CD4-positive, alpha-beta memory T cell (primary cell): ENCODE measurements at regions of chr12 and their contacts with region 1.

Region 1: DNA sequence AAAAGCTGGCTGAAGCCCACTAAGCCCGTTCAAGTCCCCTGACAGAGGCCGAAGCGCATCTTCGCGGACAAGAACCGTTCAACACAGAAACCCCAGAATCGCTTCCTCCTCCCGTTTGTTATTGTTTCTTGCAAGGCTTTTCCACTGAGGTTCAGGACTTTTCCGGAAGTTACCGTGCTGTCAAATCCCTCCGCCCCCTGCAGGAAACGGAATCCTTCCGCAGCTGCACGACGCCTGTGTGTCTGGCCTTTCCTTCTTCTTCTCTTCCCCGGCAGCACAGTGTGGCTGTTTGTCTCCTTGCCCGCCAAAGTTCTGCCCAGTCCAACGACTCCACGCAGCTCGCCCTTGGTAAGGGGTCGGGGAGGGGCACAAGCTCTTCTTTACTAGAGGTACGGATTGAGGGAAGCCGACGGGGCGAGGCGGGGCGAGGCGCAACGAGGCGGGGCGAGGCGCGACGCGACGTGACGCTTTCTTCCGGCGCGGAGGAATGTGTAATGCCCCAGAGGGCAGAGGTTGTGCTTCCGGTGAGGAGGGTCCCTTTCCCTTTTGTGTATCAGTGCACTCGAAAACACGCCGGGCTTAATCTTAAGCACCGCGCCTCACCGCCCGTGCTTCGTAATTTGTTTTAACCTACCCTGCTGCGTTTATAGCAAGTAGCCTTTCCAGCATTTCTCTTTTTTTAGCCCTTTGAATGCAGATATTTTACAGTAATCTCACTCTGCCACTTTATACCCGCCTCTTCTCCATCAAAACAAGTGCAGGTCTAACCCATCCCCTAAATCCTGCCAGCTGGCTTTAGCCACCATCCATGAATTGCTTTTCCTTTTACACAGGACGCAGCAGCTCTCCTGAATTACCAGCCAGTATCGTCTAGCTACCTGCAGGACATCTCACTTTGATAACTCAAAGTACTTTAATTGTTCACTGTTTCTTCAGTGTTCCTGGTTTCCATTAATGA is at the start of gene KDM5A:
- DNase-seq: peak; percentile 92 to 95 (median 94)
- H3K4me3 ChIP-seq: peak within 1 kb of the TSS; percentile 87 to 94
- H3K4me3 Mint-ChIP-seq: peak within 1 kb of the TSS; percentile 93 to 100 (median 98)
- H3K27ac ChIP-seq: peak within 1 kb of the TSS; percentile 90
- H3K27ac Mint-ChIP-seq: peak within 1 kb of the TSS; percentile 97 to 100 (median 100)
- H3K4me1 ChIP-seq: peaks cover 45% of the 10 kb centered on the region
- H3K4me1 Mint-ChIP-seq: peaks cover 21 to 56% (median 37%) of the 10 kb centered on the region in 4 donors
- H3K27me3 ChIP-seq: no peaks in the 10 kb centered on the region
- H3K27me3 Mint-ChIP-seq: peaks cover 0 to 4% of the 10 kb centered on the region in 2 donors
- total RNA-seq, gene KDM5A: 126 to 134 TPM

Region 2: GRCh38 chr12:106118-106591 is 283.3 kb before region 1 on chr12:
- CTCF ChIA-PET with region 1: no interaction called
- POLR2A ChIA-PET with region 1: no interaction called
- intact Hi-C with region 1: no loop called
- DNase-seq: no peak
- H3K4me3 ChIP-seq: no peak overlapping the region
- H3K4me3 Mint-ChIP-seq: no peak overlapping the region
- H3K27ac ChIP-seq: no peak overlapping the region
- H3K27ac Mint-ChIP-seq: no peak overlapping the region
- H3K4me1 ChIP-seq: peaks cover 7% of the 10 kb centered on the region
- H3K4me1 Mint-ChIP-seq: peaks cover 0 to 10% (median 7%) of the 10 kb centered on the region in 4 donors
- H3K27me3 ChIP-seq: no peaks in the 10 kb centered on the region
- H3K27me3 Mint-ChIP-seq: peaks cover 11% of the 10 kb centered on the region in 2 donors

Region 3: DNA sequence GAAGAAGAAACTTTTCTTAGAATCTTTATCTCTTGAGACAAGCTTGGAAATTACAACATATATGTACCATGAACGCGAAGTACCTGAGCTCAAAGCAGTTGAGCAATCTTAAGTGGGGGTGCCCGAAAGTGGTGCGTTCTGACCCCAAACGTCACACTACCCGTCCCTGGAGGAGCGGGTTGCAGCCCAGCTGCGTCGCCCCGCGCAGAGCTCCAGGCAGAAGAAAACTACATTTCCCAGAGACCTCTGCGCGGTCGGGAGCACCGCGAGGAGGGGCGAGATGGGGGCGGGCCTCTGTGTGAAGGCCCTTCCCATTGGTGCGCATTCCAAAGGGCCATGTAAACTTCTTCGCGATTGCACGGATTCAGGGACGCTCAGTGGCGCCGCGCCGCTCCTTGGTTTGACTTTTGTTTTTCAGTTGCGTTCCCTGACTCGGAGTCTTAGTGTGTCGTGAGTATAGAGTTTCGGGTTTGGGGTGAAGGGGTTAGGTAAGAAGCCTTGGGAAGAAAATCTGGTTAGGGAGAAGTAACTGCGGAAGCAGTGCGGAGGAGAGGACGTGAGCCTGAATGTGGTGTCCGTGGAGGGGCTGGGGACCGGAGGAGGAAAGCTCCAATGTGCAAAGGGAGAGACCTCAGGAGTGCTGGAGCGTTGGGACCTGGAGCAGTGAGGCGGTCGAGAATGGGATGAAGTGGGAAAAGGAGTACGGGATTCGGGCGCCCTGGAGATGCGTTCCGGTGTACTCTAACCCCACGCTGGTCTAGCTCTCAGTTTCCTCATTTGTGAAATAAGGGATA is 12.0 kb after region 1 on chr12 and contains the start of gene CCDC77:
- CTCF ChIA-PET with region 1: interaction called, 10 read pairs
- POLR2A ChIA-PET with region 1: interaction called, 84 read pairs
- intact Hi-C with region 1: no loop called
- DNase-seq: peak; percentile 92 to 97 (median 95)
- H3K4me3 ChIP-seq: peak within 1 kb of the TSS; percentile 88 to 98
- H3K4me3 Mint-ChIP-seq: peak within 1 kb of the TSS in 1 of 8 donors; percentile 5
- H3K27ac ChIP-seq: peak within 1 kb of the TSS; percentile 68
- H3K27ac Mint-ChIP-seq: no peak within 1 kb of the TSS
- H3K4me1 ChIP-seq: peaks cover 17% of the 10 kb centered on the region
- H3K4me1 Mint-ChIP-seq: peaks cover 0 to 3% (median under 1%) of the 10 kb centered on the region in 4 donors
- H3K27me3 ChIP-seq: no peaks in the 10 kb centered on the region
- H3K27me3 Mint-ChIP-seq: no peaks in the 10 kb centered on the region
- total RNA-seq, gene CCDC77: 7.9 to 13.0 TPM

Region 4: DNA sequence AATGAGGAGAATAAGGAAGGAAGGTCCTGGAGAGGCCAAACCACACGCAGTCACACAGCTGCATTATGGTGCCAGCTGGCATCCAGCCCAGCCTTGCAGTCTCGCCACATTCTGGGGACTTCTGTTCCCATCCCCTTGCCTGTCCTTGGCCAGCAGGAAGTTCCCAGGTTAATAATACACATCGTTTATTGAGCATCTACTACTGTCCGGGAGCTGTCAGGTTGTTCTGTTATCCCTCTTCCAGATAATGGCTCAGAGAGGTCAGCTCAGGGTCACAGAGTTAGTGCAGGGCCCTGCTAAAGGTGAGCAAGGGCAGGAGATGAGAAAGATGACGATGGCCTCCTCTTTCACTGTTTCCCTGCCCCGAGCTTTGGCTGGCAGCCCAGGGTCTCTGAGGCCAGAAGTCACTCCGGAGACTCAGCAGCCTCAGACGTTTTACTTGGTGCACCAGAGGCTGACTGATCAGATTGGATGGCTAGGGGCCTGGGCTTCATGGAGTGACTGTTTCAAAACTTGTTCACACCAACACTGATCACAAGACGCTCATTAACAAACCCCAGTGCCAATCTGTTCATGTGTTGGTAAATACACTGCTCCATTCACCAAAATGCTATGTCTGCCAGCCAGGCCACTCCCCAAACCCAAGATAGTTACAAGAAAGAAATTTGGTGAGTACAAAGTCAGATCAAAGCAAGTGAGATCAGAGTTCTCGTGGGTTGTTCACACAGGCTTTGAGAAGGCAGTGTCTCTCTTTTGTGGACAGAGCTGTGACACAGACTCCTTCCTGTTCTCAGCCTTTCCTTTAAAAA is 149.5 kb after region 1 on chr12:
- CTCF ChIA-PET with region 1: no interaction called
- POLR2A ChIA-PET with region 1: no interaction called
- intact Hi-C with region 1: no loop called
- DNase-seq: peak; percentile 80 to 87 (median 84)
- H3K4me3 ChIP-seq: no peak overlapping the region
- H3K4me3 Mint-ChIP-seq: peak overlapping the region in 7 of 8 donors; percentile 0 to 78 (median 61)
- H3K27ac ChIP-seq: no peak overlapping the region
- H3K27ac Mint-ChIP-seq: peak overlapping the region; percentile 84 to 93 (median 88)
- H3K4me1 ChIP-seq: peaks cover 25% of the 10 kb centered on the region
- H3K4me1 Mint-ChIP-seq: peaks cover 14 to 22% (median 19%) of the 10 kb centered on the region in 4 donors
- H3K27me3 ChIP-seq: no peaks in the 10 kb centered on the region
- H3K27me3 Mint-ChIP-seq: no peaks in the 10 kb centered on the region